ENCODE measurements at regions of chr3 and their contacts with region 1.

Region 1: GRCh38 chr3:126522363-126522788 is 1.6 kb upstream of the CHST13 start:
- DNase-seq: peak; percentile 31
- H3K4me3 ChIP-seq: no peak overlapping the region
- H3K27ac ChIP-seq: no peak overlapping the region
- H3K4me1 ChIP-seq: peaks cover 5% of the 10 kb centered on the region
- H3K27me3 ChIP-seq: peaks cover 4% of the 10 kb centered on the region
- CTCF ChIP-seq: peak; percentile 62 to 89

Region 2: GRCh38 chr3:126567696-126568438 is 45.5 kb after region 1 on chr3:
- CTCF ChIA-PET with region 1: no interaction called
- dilution Hi-C with region 1: no loop called
- in situ Hi-C with region 1: no loop called
- intact Hi-C with region 1: loop called (anchors 1 kb)
- DNase-seq: no peak
- H3K4me3 ChIP-seq: no peak overlapping the region
- H3K27ac ChIP-seq: no peak overlapping the region
- H3K4me1 ChIP-seq: peaks cover 8% of the 10 kb centered on the region
- H3K27me3 ChIP-seq: peaks cover 3% of the 10 kb centered on the region
- CTCF ChIP-seq: peak; percentile 12 to 38